ENCODE measurements at regions of chrX and their contacts with region 1.

Region 1: DNA sequence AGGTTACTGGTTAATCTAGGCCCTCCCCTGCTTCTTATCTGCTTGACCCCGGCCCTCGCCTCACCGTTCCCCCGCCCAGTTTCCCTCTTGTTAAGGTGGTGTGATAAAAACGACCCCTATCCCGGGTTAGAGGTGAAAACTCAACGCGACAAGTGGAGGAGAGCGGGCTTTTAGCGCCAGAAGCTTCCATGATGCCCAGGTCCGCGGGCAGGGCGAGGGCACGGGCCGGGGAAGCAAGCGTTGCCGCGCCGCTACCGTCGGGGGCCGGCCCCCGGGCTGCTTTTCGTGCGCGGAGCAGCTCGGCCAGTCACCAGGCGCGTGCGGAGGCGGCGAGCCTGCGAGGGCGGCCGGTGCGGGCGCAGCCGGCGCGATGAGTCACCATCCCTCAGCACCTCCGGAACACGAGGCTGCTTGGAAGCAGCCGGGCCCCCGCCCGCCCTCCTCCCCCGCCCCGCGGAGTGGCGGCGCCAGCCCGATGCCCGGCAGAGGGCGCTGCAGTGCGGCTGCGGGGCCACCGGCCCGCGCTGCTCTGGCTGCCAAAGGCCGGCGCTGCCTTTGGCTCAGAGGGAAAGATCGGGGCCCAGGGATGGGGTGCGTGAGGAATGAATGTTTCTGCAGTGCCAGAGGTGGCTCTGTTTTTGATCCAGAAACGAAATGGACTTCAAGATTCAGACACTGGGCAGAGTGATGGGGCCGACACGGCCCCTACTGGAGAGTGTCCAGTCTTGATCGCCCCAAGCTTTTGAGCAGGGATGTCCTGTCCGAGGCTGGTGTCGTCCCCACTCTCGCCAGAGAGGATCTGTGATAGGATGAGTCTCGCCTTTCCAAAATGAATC is 107.8 kb downstream of the NHSL2 start:
- DNase-seq: peak; percentile 91

Region 2: DNA sequence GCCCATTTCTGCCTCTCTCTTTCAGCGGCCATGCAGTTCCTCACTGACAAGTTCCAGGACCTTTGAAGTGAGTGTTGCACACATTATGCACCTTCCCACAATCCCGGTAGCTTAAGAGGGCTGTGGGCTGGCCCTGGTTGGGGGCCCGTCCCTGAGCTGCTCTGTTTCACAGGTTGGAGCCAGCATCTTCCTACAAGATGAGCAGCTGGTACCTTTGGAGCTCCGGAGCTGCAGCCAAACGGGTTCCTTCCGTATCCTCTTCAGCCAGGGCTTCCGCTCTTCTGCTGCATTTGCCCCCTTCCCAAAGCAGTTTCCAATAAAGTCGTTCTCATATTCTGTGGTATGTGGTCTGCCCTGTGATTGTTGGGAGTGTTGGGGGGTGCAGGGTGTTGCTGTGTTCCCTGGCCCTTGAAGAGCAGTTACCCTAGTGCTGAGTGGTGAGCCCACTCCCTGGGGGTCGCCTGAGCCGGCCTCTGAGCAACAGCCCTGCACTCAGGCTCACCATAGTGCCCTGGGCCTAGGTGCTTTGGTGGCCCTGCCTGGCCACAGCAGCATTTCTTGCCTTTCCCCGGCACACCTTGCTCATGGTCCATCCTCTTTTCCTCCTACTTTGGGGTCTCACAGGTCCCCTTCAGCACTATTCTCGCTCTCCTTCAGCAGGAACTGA is 195.0 kb before region 1 on chrX:
- intact Hi-C with region 1: no loop called
- DNase-seq: no peak

Region 3: GRCh38 chrX:71989768-71990426 is 28.6 kb before region 1 on chrX:
- intact Hi-C with region 1: loop called (anchors 2 kb)
- DNase-seq: no peak

Region 4: DNA sequence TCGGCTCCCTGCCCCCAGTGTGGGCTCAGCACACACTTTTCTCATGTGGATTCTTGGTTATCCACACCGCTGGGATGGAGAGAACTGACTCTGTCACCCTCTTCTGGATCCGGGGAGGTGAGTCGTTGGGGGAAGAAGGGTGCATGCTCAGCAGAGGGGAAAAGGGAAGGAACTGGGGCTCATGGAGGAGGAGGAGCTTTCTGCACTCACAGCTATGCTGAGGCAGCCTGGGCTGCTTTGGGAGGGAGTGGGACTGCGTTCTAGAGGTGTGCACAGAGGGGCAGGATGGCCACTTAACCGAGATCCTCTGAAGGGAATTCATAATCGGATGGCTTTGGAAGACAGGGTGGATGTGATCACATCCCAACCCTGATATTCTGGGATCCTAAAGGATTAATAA is 61.7 kb after region 1 on chrX:
- intact Hi-C with region 1: no loop called
- DNase-seq: no peak